Left ventricle myocardium inferior (tissue), 1 donor: ENCODE measurements at regions of chr1 and their contacts with region 1.

Region 1: GRCh38 chr1:20574686-20575540 is 14.0 kb upstream of the CDA start:
- DNase-seq: peak; percentile 87
- H3K4me3 ChIP-seq: no peak overlapping the region
- H3K27ac ChIP-seq: no peak overlapping the region
- H3K4me1 ChIP-seq: no peaks in the 10 kb centered on the region
- H3K27me3 ChIP-seq: peaks cover 10% of the 10 kb centered on the region
- CTCF ChIP-seq: peak; percentile 84

Region 2: DNA sequence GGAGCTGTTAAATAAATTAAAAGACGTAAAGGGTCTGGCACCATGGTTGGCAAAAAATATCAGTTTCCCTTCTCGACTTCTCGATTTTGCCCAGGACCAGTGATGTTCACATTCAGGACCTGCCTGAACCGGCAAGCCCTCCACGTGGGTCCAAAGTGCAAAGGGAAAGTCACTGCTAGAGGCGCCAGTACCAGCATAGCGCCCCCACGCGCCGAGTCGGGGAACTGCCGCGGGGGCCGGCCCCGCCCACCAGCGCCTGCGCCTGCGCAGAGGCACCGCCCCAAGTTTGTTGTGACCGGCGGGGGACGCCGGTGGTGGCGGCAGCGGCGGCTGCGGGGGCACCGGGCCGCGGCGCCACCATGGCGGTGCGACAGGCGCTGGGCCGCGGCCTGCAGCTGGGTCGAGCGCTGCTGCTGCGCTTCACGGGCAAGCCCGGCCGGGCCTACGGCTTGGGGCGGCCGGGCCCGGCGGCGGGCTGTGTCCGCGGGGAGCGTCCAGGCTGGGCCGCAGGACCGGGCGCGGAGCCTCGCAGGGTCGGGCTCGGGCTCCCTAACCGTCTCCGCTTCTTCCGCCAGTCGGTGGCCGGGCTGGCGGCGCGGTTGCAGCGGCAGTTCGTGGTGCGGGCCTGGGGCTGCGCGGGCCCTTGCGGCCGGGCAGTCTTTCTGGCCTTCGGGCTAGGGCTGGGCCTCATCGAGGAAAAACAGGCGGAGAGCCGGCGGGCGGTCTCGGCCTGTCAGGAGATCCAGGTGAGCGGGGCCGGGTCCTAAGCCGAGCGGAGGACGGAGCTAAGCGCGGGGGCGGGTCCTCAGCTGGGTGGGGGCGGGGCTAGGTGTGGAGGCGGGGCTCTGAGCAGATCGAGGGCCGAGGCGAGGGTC is 58.5 kb after region 1 on chr1 and contains the start of gene PINK1:
- intact Hi-C with region 1: loop called (anchors 5 kb)
- DNase-seq: peak; percentile 77
- H3K4me3 ChIP-seq: peak within 1 kb of the TSS; percentile 100
- H3K27ac ChIP-seq: peak within 1 kb of the TSS; percentile 100
- H3K4me1 ChIP-seq: peaks cover 41% of the 10 kb centered on the region
- H3K27me3 ChIP-seq: no peaks in the 10 kb centered on the region
- CTCF ChIP-seq: peak; percentile 99
- total RNA-seq, gene PINK1: 250 TPM